ENCODE measurements at regions of chr20 and their contacts with region 1.

Region 1: GRCh38 chr20:51595058-51595532 is 52.6 kb upstream of the NFATC2 start:
- DNase-seq: peak; percentile 45
- ATAC-seq: peak; percentile 98
- H3K4me3 ChIP-seq: no peak overlapping the region
- H3K27ac ChIP-seq: 0 out of 2 replicates have a peak overlapping the region, but pooled peaks have one; percentile 2
- H3K4me1 ChIP-seq: peaks cover 16% of the 10 kb centered on the region
- H3K27me3 ChIP-seq: no peaks in the 10 kb centered on the region; a peak in 1 of 4 replicates
- CTCF ChIP-seq: peak; percentile 89 to 97 (median 92)
- EP300 ChIP-seq: peak in 1 of 2 experiments; percentile 29; a peak in 1 of 4 replicates
- POLR2A ChIP-seq: no peak
- RAD21 ChIP-seq: peak; percentile 92

Region 2: DNA sequence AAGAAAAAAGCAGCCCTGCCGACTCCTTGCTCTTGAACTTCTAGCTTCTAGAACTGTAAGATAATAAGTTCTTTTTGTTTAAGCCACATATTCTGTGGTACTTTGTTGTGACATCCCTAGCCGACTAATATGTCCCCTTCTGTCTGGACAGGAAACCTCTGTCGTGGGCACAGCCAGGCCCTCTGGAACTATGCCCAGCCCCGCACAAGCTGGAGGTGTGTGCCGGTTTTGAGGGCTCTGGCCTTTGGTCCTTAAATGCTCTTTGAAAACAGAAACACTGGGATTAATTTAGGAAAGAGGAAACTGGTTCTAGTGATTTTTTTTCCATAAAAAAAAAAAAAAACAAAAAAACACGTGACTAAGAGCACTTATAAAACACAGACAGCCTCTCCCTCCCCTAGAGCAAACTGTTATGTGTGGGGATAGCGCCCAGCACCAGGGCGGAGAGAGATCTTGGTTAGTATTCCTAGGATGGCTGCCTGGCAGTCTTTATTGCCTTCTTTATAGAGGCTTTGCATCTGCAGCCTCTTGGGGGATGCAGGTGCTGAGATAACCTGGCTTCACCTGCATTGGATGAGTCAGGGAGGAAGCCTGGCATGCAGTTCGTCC is 296.9 kb before region 1 on chr20:
- CTCF ChIA-PET with region 1: no interaction called
- POLR2A ChIA-PET with region 1: no interaction called
- RAD21 ChIA-PET with region 1: no interaction called
- SMC1A ChIA-PET with region 1: no interaction called
- in situ Hi-C with region 1: no loop called
- intact Hi-C with region 1: no loop called
- DNase-seq: no peak
- ATAC-seq: no peak
- H3K4me3 ChIP-seq: no peak overlapping the region
- H3K27ac ChIP-seq: no peak overlapping the region
- H3K4me1 ChIP-seq: no peaks in the 10 kb centered on the region
- H3K27me3 ChIP-seq: peaks cover 0 to 1% of the 10 kb centered on the region in 2 experiments; a peak in 1 of 4 replicates
- CTCF ChIP-seq: no peak
- EP300 ChIP-seq: no peak
- POLR2A ChIP-seq: no peak
- RAD21 ChIP-seq: no peak

Region 3: DNA sequence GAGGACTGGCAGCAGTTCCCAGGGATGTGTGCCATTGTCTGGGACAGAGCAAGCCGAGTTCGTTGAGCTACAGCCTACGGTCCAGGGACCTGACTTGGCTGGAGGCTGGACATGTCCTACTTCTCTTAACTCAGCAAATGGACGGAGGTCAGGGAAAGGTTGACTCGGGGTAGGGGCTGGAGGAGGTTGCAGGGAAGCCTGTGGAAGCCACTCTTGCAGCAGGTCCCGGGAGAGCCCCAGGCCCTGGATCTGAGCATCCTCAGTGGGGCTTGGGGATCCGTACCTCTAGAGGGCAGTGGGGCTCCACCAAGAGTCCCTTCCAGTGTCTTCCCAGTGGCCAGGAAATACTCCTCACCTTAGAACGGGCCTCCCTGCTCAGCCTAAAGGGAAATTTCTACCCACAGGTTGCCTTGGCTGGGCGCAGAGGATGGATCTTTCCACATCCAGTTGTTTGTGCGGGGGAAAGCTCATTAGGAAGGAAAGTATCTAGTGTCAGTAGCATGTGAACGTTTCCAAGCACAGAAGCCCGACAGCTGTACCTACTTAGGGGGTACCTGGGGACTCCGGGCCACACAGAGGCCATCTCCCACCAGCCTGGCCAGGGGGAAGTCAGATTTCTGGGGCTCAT is 222.8 kb before region 1 on chr20:
- CTCF ChIA-PET with region 1: interaction called, 53 read pairs
- POLR2A ChIA-PET with region 1: no interaction called
- RAD21 ChIA-PET with region 1: interaction called, 12 read pairs
- SMC1A ChIA-PET with region 1: interaction called, 11 read pairs
- in situ Hi-C with region 1: loop called (anchors 5 kb)
- intact Hi-C with region 1: loop called (anchors 1 kb)
- DNase-seq: no peak
- ATAC-seq: peak; percentile 97
- H3K4me3 ChIP-seq: no peak overlapping the region
- H3K27ac ChIP-seq: no peak overlapping the region
- H3K4me1 ChIP-seq: no peaks in the 10 kb centered on the region
- H3K27me3 ChIP-seq: no peaks in the 10 kb centered on the region
- CTCF ChIP-seq: peak; percentile 84 to 87 (median 85)
- EP300 ChIP-seq: no peak
- POLR2A ChIP-seq: no peak
- RAD21 ChIP-seq: peak; percentile 90

Region 4: DNA sequence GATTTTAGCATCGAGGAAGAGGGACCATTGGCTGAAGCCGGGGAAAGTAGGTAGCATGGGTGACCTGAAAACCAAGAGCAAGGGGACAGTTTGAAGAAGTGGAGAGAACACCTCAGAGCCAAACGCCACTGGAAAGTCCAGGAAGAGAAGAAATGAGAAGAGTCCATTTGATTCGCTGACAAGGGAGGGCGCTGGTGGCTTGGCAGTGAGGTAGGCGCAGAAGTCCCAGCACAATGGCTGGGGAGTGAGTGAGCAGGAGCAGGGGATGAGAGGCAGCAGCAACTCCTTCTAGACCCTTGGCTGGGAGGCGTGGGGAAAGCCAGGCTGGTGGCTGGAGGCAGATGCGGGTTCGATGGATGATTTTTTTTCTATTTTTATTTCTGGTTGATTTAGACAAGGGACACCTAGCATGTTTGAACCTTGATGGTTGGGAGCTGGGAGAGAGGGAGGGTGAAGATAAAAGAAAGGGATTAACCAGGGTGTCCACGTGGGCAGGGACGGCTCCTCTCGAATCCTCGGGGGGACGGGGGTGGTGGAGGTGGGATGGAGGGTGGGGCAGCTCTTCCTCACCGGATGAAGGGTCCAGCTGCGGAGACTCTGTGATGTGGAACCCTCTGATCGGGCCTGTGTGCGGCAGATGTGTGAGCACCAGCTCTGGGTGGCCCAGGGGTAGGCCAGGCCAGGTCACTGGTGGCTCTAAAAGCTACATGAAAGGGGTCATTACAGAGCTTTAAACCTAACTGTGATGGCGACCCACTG is 216.7 kb before region 1 on chr20:
- CTCF ChIA-PET with region 1: interaction called, 53 read pairs
- POLR2A ChIA-PET with region 1: no interaction called
- RAD21 ChIA-PET with region 1: interaction called, 12 read pairs
- SMC1A ChIA-PET with region 1: interaction called, 10 read pairs
- in situ Hi-C with region 1: loop called (anchors 5 kb)
- intact Hi-C with region 1: no loop called
- DNase-seq: no peak
- ATAC-seq: 0 out of 3 replicates have a peak, but pooled peaks have one; percentile 16
- H3K4me3 ChIP-seq: no peak overlapping the region
- H3K27ac ChIP-seq: no peak overlapping the region
- H3K4me1 ChIP-seq: peaks cover 14% of the 10 kb centered on the region
- H3K27me3 ChIP-seq: no peaks in the 10 kb centered on the region
- CTCF ChIP-seq: peak in 2 of 3 experiments; percentile 27 to 30; a peak in 3 of 6 replicates
- EP300 ChIP-seq: no peak
- POLR2A ChIP-seq: no peak
- RAD21 ChIP-seq: peak; percentile 45

Region 5: GRCh38 chr20:51487565-51488268 is 107.4 kb before region 1 on chr20:
- CTCF ChIA-PET with region 1: no interaction called
- POLR2A ChIA-PET with region 1: no interaction called
- RAD21 ChIA-PET with region 1: no interaction called
- SMC1A ChIA-PET with region 1: no interaction called
- in situ Hi-C with region 1: no loop called
- intact Hi-C with region 1: loop called (anchors 10 kb)
- DNase-seq: no peak
- ATAC-seq: no peak
- H3K4me3 ChIP-seq: no peak overlapping the region
- H3K27ac ChIP-seq: no peak overlapping the region
- H3K4me1 ChIP-seq: peaks cover 2% of the 10 kb centered on the region
- H3K27me3 ChIP-seq: no peaks in the 10 kb centered on the region
- CTCF ChIP-seq: no peak
- EP300 ChIP-seq: no peak
- POLR2A ChIP-seq: no peak
- RAD21 ChIP-seq: no peak

Region 6: DNA sequence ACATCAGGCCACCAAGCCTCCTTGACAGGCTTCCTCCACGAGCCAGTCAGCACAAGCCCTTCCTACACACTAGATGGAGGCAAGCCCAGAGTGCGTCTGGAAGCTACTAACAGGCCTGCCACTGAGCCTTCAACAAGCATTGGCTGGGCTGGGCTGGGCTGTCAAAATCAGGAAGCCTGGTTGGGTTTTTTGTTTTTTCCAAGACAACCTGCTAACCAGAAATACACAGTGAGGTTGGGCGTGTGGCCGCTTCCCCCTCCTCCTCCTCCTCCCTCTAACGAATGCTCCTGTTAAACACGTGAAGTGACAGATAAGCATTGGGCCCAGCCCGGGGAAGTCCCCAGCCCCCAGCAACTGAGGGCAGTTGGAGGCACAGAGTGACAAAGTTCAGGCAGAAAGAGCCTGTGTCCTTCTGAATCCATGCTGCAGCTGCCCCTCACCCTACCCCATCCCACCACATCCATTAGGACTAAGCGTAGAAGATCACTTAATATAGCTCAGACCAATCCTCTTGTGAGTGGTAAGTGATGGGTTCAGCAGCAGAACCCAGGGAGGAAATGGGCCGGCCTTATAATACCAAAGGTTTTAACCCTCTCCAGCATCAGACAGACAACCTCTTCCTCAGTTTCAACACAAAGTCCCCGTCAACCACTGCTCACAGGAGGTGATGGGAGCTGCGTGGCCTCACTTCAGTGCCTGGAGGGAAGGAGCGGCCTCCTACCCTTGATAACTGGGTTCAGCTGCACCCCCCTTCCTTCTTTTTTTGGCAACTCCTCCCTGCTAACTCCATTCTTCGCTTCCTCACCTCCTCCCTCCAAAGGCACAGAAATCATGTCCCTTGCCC is 53.7 kb before region 1 on chr20:
- CTCF ChIA-PET with region 1: interaction called, 8 read pairs
- POLR2A ChIA-PET with region 1: no interaction called
- RAD21 ChIA-PET with region 1: interaction called, 9 read pairs
- SMC1A ChIA-PET with region 1: interaction called, 3 read pairs
- in situ Hi-C with region 1: no loop called
- intact Hi-C with region 1: loop called (anchors 1 kb)
- DNase-seq: no peak
- ATAC-seq: peak; percentile 77
- H3K4me3 ChIP-seq: peak overlapping the region; percentile 88
- H3K27ac ChIP-seq: peak overlapping the region; percentile 82
- H3K4me1 ChIP-seq: peaks cover 23% of the 10 kb centered on the region
- H3K27me3 ChIP-seq: no peaks in the 10 kb centered on the region; a peak in 2 of 4 replicates
- CTCF ChIP-seq: no peak
- EP300 ChIP-seq: peak in 1 of 2 experiments; percentile 66; a peak in 2 of 4 replicates
- POLR2A ChIP-seq: peak; percentile 44
- RAD21 ChIP-seq: no peak

Region 7: GRCh38 chr20:51624157-51624731 is 29.1 kb after region 1 on chr20:
- CTCF ChIA-PET with region 1: interaction called, 24 read pairs
- POLR2A ChIA-PET with region 1: no interaction called
- RAD21 ChIA-PET with region 1: interaction called, 5 read pairs
- SMC1A ChIA-PET with region 1: interaction called, 10 read pairs
- in situ Hi-C with region 1: no loop called
- intact Hi-C with region 1: no loop called
- DNase-seq: no peak
- ATAC-seq: peak; percentile 83
- H3K4me3 ChIP-seq: no peak overlapping the region
- H3K27ac ChIP-seq: no peak overlapping the region
- H3K4me1 ChIP-seq: peaks cover 22% of the 10 kb centered on the region
- H3K27me3 ChIP-seq: no peaks in the 10 kb centered on the region; a peak in 1 of 4 replicates
- CTCF ChIP-seq: peak; percentile 72 to 82 (median 80); a peak in 5 of 6 replicates
- EP300 ChIP-seq: no peak
- POLR2A ChIP-seq: no peak
- RAD21 ChIP-seq: peak; percentile 69